ENCODE measurements at regions of chr3 and their contacts with region 1.

Region 1: DNA sequence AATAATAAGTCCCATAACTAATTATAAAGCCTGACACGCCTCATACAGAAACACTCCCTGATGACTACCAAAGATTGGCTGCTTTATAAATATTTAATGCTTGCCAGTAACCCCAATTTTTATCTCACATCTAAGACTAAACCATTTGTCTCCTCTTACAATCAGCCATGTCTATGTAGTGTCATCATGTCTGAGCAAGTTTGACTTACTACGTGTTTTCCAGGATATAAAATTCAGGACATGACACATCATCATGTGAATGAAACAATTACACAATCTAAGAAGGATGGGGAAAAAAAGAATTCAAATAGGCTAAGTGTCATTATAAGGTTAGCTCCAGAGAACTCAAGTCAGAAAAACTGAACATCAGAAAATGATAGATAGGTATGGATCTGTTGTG is 208.7 kb downstream of the MECOM start:
- DNase-seq: peak; percentile 82
- ATAC-seq: peak; percentile 77
- H3K4me3 ChIP-seq: no peak overlapping the region
- H3K27ac ChIP-seq: peak overlapping the region; percentile 75
- H3K4me1 ChIP-seq: peaks cover 25% of the 10 kb centered on the region
- H3K27me3 ChIP-seq: no peaks in the 10 kb centered on the region
- CTCF ChIP-seq: no peak

Region 2: DNA sequence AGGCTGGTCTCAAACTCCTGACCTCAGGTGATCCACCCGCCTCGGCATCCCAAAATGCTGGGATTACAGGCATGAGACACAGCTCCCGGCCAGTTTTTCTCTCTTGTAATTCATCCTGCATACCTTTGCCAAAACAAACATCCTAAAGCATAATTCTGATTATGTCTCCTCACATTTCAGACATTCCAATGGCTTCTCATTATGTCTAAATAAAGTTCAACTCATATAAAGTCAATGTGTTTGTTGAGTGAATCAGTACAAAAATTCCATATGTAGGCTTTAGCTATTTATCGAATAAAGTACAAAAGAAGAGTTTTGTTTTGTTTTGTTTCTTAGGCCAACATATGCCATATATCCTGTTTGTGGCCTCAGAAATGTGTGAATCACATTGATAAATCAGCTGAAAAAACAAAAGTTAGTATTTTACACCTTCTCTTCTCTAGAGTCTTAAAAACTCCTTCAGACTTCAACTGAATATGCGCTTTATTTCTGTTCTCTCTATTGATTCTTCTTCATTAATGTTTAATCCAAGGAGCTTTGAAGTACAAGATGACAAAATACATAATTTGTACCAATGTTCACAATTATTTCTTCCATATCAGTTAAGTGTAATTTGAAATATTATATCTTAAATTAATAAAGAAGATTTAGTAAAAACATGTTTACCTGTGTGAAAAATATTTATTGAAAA is 42.9 kb after region 1 on chr3:
- CTCF ChIA-PET with region 1: no interaction called
- POLR2A ChIA-PET with region 1: no interaction called
- intact Hi-C with region 1: loop called (anchors 1 kb)
- DNase-seq: peak; percentile 95
- ATAC-seq: peak; percentile 91
- H3K4me3 ChIP-seq: peak overlapping the region; percentile 12; the same call in 1 of the 2 replicates
- H3K27ac ChIP-seq: peak overlapping the region; percentile 44
- H3K4me1 ChIP-seq: peaks cover 19% of the 10 kb centered on the region
- H3K27me3 ChIP-seq: no peaks in the 10 kb centered on the region
- CTCF ChIP-seq: no peak